ENCODE measurements at regions of chr7 and their contacts with region 1.

Region 1: GRCh38 chr7:36487756-36488336 is 98.2 kb downstream of the ANLN start:
- DNase-seq: peak; percentile 60
- H3K27ac ChIP-seq: no peak overlapping the region
- CTCF ChIP-seq: peak; percentile 84

Region 2: DNA sequence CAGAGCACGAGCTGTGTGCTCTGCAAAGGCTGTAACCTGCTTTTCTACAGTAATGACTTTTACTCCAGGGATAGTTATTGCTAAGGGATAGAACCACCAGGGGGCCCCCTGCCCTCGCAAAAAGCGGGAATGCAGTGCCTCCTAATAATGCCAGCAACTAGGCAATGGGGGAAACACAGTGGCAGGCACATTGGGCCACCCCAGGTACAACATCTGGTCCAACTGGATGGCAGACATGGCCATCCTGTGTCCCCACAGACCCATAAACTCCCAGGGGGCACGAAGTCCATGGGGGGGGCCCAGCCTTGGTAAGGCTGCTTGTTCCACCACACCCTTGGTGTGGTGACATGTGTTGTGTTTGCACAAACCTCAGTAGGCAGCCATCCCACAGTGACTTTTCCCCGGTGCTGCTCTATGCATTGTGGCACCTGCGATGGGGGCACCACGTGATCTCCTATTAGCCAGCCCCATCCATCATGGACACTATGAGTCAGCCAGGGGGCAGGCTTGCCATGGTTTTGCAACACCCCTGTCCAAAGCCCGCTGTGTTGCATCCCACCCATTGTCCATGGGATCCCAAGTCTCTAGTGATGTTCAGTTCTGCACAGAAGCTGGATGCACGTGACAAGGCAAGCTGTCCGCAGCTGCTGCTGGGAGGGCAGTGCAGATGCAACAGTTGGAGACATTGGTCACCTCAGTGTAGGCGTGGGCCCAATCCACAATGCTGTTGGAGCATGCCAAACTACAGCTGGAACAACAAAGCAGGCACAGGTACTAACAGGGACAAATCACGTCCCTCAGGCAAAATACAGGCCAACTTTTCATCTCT is 14.2 kb before region 1 on chr7:
- CTCF ChIA-PET with region 1: interaction called, 10 read pairs
- POLR2A ChIA-PET with region 1: no interaction called
- DNase-seq: peak; percentile 51
- H3K27ac ChIP-seq: peak overlapping the region; percentile 73
- CTCF ChIP-seq: no peak; the same call in 1 of the 2 replicates

Region 3: DNA sequence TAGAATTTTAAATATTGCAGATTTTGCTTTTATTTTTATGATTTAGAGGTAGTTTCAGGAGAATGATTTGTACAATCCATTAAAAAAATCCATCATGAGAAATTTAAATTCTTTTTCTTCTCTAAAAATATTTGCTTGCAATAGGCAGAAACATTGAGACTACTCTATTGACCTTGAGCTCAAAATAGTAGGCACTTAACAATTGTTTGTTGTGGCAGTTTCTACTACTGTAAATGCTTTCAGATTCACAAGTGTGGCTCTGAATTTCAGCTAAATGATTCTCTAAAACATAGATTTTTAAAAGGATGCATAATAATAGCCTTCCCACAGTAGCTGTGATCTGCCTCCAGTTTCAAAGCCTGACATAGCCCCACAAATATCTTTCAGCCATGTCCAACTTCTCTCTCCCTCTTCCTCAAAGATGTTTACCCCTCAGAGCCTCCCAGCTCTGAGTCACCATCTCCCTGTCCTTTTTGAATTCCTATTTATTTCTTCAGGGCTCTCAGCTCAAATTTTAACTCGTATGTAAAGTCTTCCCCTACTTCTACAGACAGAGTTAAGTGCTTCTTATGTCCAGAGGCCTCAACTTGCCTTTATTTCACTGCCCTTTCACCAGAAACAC is 76.0 kb after region 1 on chr7:
- CTCF ChIA-PET with region 1: no interaction called
- POLR2A ChIA-PET with region 1: no interaction called
- DNase-seq: no peak
- H3K27ac ChIP-seq: no peak overlapping the region
- CTCF ChIP-seq: no peak

Region 4: GRCh38 chr7:36670585-36671431 is 183.0 kb after region 1 on chr7:
- CTCF ChIA-PET with region 1: interaction called, 44 read pairs
- POLR2A ChIA-PET with region 1: no interaction called
- DNase-seq: peak; percentile 64
- H3K27ac ChIP-seq: no peak overlapping the region
- CTCF ChIP-seq: peak; percentile 93

Region 5: GRCh38 chr7:37201003-37201875 is 713.4 kb after region 1 on chr7:
- CTCF ChIA-PET with region 1: interaction called, 10 read pairs
- POLR2A ChIA-PET with region 1: no interaction called
- DNase-seq: peak; percentile 81
- H3K27ac ChIP-seq: no peak overlapping the region
- CTCF ChIP-seq: peak; percentile 88

Measured in RWPE1 (cell line).